Activated CD4-positive, alpha-beta T cell treated with anti-CD3 and anti-CD28 coated beads for 36 hours (primary cell): ENCODE measurements at regions of chr5 and their contacts with region 1.

Region 1: GRCh38 chr5:160439205-160439600 is 17.5 kb downstream of the PTTG1 start:
- DNase-seq: peak; percentile 93
- ATAC-seq: peak; percentile 78
- H3K4me3 Mint-ChIP-seq: peak overlapping the region; percentile 74
- H3K27ac Mint-ChIP-seq: peak overlapping the region; percentile 97
- H3K4me1 Mint-ChIP-seq: peaks cover 35% of the 10 kb centered on the region
- H3K27me3 Mint-ChIP-seq: peaks cover 4% of the 10 kb centered on the region

Region 2: DNA sequence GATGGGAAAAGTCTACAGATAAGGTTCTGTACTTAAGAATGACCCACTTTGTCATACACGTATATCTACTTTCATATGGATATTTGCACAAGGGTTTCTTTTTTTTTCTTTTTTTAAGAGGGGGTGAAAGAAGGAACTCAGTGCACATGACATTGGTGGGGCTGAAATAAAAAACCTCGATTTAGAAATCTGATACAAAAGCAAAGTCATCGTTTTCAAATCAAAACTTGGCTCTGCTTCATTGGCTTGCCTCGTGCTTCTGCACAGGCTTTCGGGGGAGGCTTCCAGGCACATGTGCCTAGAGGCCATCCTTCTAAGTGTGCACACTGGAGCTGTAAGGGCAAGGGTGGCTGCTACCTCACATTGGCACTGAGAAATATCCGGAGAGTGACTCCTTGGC is 13.6 kb after region 1 on chr5:
- CTCF ChIA-PET with region 1: interaction called, 35 read pairs
- POLR2A ChIA-PET with region 1: no interaction called
- intact Hi-C with region 1: no loop called
- DNase-seq: no peak
- ATAC-seq: no peak
- H3K4me3 Mint-ChIP-seq: no peak overlapping the region
- H3K27ac Mint-ChIP-seq: no peak overlapping the region
- H3K4me1 Mint-ChIP-seq: peaks cover 10% of the 10 kb centered on the region
- H3K27me3 Mint-ChIP-seq: no peaks in the 10 kb centered on the region

Region 3: GRCh38 chr5:160479926-160480325 is 40.7 kb after region 1 on chr5:
- CTCF ChIA-PET with region 1: interaction called, 17 read pairs
- POLR2A ChIA-PET with region 1: no interaction called
- intact Hi-C with region 1: no loop called
- DNase-seq: no peak
- ATAC-seq: peak; percentile 80
- H3K4me3 Mint-ChIP-seq: no peak overlapping the region
- H3K27ac Mint-ChIP-seq: peak overlapping the region; percentile 61
- H3K4me1 Mint-ChIP-seq: peaks cover 54% of the 10 kb centered on the region
- H3K27me3 Mint-ChIP-seq: no peaks in the 10 kb centered on the region

Region 4: GRCh38 chr5:160500786-160501779 is 61.9 kb after region 1 on chr5:
- CTCF ChIA-PET with region 1: interaction called, 100 read pairs
- POLR2A ChIA-PET with region 1: interaction called, 18 read pairs
- intact Hi-C with region 1: no loop called
- DNase-seq: no peak
- ATAC-seq: no peak
- H3K4me3 Mint-ChIP-seq: no peak overlapping the region
- H3K27ac Mint-ChIP-seq: no peak overlapping the region
- H3K4me1 Mint-ChIP-seq: peaks cover 18% of the 10 kb centered on the region
- H3K27me3 Mint-ChIP-seq: no peaks in the 10 kb centered on the region

Region 5: GRCh38 chr5:160787240-160787639 is 348.0 kb after region 1 on chr5:
- CTCF ChIA-PET with region 1: no interaction called
- POLR2A ChIA-PET with region 1: no interaction called
- intact Hi-C with region 1: loop called (anchors 1 to 2 kb)
- DNase-seq: peak; percentile 43
- ATAC-seq: peak; percentile 30
- H3K4me3 Mint-ChIP-seq: no peak overlapping the region
- H3K27ac Mint-ChIP-seq: no peak overlapping the region
- H3K4me1 Mint-ChIP-seq: no peaks in the 10 kb centered on the region
- H3K27me3 Mint-ChIP-seq: peaks cover 6% of the 10 kb centered on the region